Sciatic nerve (tissue), 2 donors: ENCODE measurements at regions of chr2 and their contacts with region 1.

Region 1: DNA sequence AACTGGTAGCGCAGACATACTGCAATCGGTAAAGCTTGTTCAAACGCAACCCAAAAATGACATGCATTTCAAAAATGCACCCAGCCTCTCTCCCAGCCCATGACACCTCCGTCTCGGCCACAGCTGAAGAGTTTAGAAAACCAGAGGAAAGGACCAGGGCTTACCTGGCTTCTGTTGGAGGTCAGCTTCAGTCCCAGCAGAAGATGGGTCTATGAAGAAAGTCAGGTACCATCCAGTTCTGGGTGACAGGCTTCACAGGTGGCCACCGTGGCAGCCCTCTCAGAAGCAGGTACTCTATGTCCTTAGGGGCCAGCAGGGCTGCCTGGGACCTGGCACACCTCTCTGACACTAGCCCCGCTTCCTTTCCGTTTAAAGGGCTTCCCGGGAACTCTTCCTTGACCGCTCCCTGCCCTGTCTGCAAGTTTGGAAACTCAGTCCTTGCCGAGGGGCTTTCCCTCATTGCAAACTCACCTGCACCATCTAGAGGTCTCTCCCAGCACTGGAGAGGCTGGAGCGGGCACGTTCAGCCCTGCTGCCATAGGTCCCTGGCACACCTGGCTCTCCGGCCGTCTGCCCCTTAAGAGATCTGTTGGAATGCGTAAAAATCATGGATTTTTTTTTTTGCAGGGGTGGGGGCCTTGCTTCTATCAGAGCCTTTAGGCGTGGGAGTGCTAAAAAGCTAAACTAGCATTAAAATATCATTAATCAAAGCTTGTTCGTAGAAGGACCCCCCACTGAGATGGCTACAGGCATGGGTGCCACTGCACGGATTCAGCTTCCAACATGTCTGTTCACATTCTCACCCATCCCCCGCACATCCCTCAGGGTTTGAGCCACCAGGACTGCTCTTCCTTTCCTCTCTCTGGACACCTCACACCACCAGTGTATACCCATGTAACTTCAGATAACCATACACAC is at the start of gene EDAR:
- DNase-seq: no peak
- ATAC-seq: peak; percentile 84
- total RNA-seq, gene EDAR: 0.22 TPM

Region 2: GRCh38 chr2:109001201-109001600 is 12.1 kb after region 1 on chr2:
- intact Hi-C with region 1: no loop called
- DNase-seq: no peak
- ATAC-seq: no peak

Region 3: GRCh38 chr2:110948027-110948674 is 1959.1 kb after region 1 on chr2:
- intact Hi-C with region 1: loop called (anchors 10 kb)
- DNase-seq: no peak
- ATAC-seq: no peak